ENCODE measurements at regions of chr9 and their contacts with region 1.

Region 1: DNA sequence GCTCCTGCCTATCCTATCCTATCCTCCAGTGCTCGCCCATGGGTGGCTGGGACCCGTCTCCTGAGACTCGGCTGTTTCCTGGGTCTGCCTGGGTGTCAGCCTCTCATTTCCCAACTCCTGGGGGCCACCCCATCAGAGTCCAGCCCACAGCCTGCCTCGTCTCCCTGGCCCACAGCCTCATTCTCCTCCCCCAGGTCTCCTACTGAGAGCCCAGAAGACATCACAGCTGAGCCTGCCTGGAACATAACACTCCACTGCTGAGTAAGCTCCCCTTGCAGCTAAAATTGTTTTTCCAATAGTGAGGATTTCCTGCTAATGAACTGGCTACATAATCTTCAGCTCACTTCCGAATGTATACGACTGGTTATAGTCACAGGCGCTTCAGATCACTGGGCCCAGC is 95.3 kb downstream of the TTLL11 start:
- DNase-seq: no peak
- ATAC-seq: no peak
- H3K4me3 ChIP-seq: no peak overlapping the region
- H3K4me3 Mint-ChIP-seq: no peak overlapping the region
- H3K27ac ChIP-seq: no peak overlapping the region
- H3K27ac Mint-ChIP-seq: no peak overlapping the region
- H3K4me1 ChIP-seq: no peaks in the 10 kb centered on the region
- H3K4me1 Mint-ChIP-seq: no peaks in the 10 kb centered on the region
- H3K27me3 ChIP-seq: no peaks in the 10 kb centered on the region
- H3K27me3 Mint-ChIP-seq: no peaks in the 10 kb centered on the region
- CTCF ChIP-seq: no peak

Region 2: DNA sequence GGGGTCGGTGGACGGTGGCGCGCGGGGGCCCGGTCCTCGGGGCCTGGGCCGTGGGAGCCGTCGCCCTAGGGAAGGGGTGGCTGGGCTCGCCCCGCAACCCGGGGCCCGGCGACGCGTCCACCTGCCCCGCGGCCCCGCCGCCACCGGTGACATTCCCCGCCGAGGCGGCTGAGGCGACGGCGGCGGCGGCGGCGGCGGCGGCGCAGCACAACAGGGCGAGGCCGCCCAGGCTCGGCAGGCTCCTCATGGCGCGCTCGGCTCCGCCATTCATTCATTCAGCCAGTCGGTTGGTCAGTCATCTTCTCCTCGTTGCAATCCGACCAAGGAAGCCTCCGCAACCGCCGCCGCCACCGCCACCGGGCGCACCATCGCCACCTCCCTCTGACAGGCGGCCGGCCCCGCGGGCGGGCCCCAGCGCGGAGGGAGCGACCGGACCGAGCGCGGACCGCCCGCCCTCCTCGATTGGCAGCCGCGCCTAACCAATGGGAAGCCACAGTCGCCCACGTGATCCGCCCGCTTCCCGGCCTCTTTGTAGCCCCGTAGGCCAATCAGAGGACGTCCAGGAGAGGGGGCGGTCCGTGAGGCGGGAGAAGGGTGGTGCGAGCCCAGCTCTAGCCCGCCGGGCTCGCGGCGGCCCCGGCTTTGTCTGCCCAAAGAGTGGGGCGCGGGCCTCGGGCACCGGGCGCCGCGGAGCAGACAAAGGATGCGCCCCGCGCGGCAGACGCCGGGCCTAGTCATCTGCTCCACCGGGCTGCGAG is 1283.5 kb before region 1 on chr9 and contains the start of gene MEGF9:
- CTCF ChIA-PET with region 1: no interaction called
- POLR2A ChIA-PET with region 1: no interaction called
- intact Hi-C with region 1: no loop called
- DNase-seq: peak; percentile 97
- ATAC-seq: peak; percentile 94
- H3K4me3 ChIP-seq: peak within 1 kb of the TSS; percentile 56 to 81 (median 68)
- H3K4me3 Mint-ChIP-seq: peak within 1 kb of the TSS; percentile 88
- H3K27ac ChIP-seq: peak within 1 kb of the TSS; percentile 43 to 72
- H3K27ac Mint-ChIP-seq: peak within 1 kb of the TSS; percentile 89
- H3K4me1 ChIP-seq: peaks cover 41 to 43% of the 10 kb centered on the region in 2 donors
- H3K4me1 Mint-ChIP-seq: peaks cover 38% of the 10 kb centered on the region
- H3K27me3 ChIP-seq: no peaks in the 10 kb centered on the region
- H3K27me3 Mint-ChIP-seq: no peaks in the 10 kb centered on the region
- CTCF ChIP-seq: no peak
- total RNA-seq, gene MEGF9: 11.3 and 11.6 TPM in 2 replicates

Region 3: GRCh38 chr9:121744002-121744686 is 253.6 kb before region 1 on chr9:
- CTCF ChIA-PET with region 1: interaction called, 18 read pairs
- POLR2A ChIA-PET with region 1: no interaction called
- intact Hi-C with region 1: no loop called
- DNase-seq: peak; percentile 25
- ATAC-seq: peak; percentile 81
- H3K4me3 ChIP-seq: no peak overlapping the region
- H3K4me3 Mint-ChIP-seq: no peak overlapping the region
- H3K27ac ChIP-seq: no peak overlapping the region
- H3K27ac Mint-ChIP-seq: no peak overlapping the region
- H3K4me1 ChIP-seq: no peaks in the 10 kb centered on the region
- H3K4me1 Mint-ChIP-seq: peaks cover 5% of the 10 kb centered on the region
- H3K27me3 ChIP-seq: peaks cover 0 to 2% (median 0%) of the 10 kb centered on the region in 4 experiments
- H3K27me3 Mint-ChIP-seq: no peaks in the 10 kb centered on the region
- CTCF ChIP-seq: peak; percentile 27

Region 4: GRCh38 chr9:122075135-122076030 is 77.6 kb after region 1 on chr9:
- CTCF ChIA-PET with region 1: no interaction called
- POLR2A ChIA-PET with region 1: no interaction called
- intact Hi-C with region 1: no loop called
- DNase-seq: no peak
- ATAC-seq: no peak
- H3K4me3 ChIP-seq: no peak overlapping the region
- H3K4me3 Mint-ChIP-seq: no peak overlapping the region
- H3K27ac ChIP-seq: no peak overlapping the region
- H3K27ac Mint-ChIP-seq: no peak overlapping the region
- H3K4me1 ChIP-seq: no peaks in the 10 kb centered on the region
- H3K4me1 Mint-ChIP-seq: no peaks in the 10 kb centered on the region
- H3K27me3 ChIP-seq: no peaks in the 10 kb centered on the region
- H3K27me3 Mint-ChIP-seq: no peaks in the 10 kb centered on the region
- CTCF ChIP-seq: no peak

Measured in B cell (primary cell).